A673 (cell line): ENCODE measurements at regions of chr5 and their contacts with region 1.

Region 1: GRCh38 chr5:33806738-33807442 is 84.9 kb downstream of the ADAMTS12 start:
- DNase-seq: no peak
- H3K4me3 ChIP-seq: no peak overlapping the region
- H3K27ac ChIP-seq: no peak overlapping the region
- H3K4me1 ChIP-seq: peaks cover 7% of the 10 kb centered on the region
- H3K27me3 ChIP-seq: no peaks in the 10 kb centered on the region
- CTCF ChIP-seq: no peak

Region 2: DNA sequence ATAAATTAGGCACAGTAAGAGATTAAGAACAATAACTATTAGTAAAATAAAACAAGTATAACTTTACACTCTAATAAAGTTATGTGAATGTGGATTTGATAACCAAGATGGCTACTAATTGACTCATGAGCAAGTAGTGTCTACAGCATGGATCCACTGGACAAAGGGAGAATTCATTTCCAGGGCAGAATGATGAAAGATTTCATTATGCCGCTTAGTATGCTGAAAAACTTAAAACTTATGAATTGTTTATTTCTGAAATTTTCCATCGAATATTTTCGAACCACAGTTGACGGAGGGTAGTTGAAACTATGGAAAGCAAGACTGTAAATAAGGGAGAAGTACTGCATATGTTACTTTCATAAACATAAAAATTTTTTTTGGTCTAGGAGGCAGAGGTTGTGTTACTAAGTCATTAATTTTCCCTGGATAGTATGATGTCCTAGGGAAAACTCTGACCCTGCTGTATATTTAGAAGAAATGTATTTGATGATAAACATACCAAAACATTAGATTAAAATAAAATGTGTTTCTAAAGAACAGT is 391.0 kb before region 1 on chr5:
- CTCF ChIA-PET with region 1: no interaction called
- POLR2A ChIA-PET with region 1: no interaction called
- intact Hi-C with region 1: no loop called
- DNase-seq: no peak
- H3K4me3 ChIP-seq: no peak overlapping the region
- H3K27ac ChIP-seq: no peak overlapping the region
- H3K4me1 ChIP-seq: no peaks in the 10 kb centered on the region
- H3K27me3 ChIP-seq: peaks cover 13% of the 10 kb centered on the region
- CTCF ChIP-seq: no peak

Region 3: GRCh38 chr5:33470544-33470943 is 336.3 kb before region 1 on chr5:
- CTCF ChIA-PET with region 1: no interaction called
- POLR2A ChIA-PET with region 1: no interaction called
- intact Hi-C with region 1: loop called (anchors 10 kb)
- DNase-seq: peak; percentile 73
- H3K4me3 ChIP-seq: no peak overlapping the region
- H3K27ac ChIP-seq: no peak overlapping the region
- H3K4me1 ChIP-seq: peaks cover 6% of the 10 kb centered on the region
- H3K27me3 ChIP-seq: no peaks in the 10 kb centered on the region
- CTCF ChIP-seq: peak; percentile 80